ENCODE measurements at regions of chr1 and their contacts with region 1.

Region 1: DNA sequence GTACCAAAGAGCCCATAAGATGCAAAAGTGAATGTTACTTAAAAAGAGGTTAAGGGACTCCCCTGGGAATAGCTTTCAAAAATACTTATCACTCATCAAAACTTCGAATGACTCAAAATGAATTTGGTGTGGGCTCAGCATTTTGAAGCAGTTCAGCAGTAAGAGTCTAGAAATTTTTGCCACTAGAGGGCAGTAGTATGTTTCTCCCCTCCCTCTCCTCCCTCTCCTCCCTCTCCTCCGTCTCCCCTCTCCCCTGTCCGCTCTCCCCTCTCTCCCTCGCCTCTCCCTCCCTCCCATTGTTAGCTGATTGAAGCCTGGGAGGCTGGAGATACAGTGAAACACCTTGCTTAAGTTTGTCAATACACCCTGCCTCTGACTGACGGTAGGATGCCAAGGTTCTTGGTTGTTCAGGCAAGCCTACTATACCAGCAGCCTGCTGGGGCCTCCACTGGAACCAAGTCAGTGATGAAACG is 70.8 kb upstream of the TENT5C start:
- DNase-seq: peak; percentile 29
- H3K4me3 ChIP-seq: no peak overlapping the region
- H3K27ac ChIP-seq: no peak overlapping the region
- H3K27me3 ChIP-seq: no peaks in the 10 kb centered on the region
- CTCF ChIP-seq: peak; percentile 73

Region 2: GRCh38 chr1:117098287-117099210 is 436.5 kb before region 1 on chr1:
- CTCF ChIA-PET with region 1: no interaction called
- POLR2A ChIA-PET with region 1: no interaction called
- DNase-seq: no peak
- H3K4me3 ChIP-seq: no peak overlapping the region
- H3K27ac ChIP-seq: no peak overlapping the region
- H3K27me3 ChIP-seq: no peaks in the 10 kb centered on the region
- CTCF ChIP-seq: no peak

Region 3: GRCh38 chr1:117512743-117513321 is 22.2 kb before region 1 on chr1:
- CTCF ChIA-PET with region 1: interaction called, 37 read pairs
- POLR2A ChIA-PET with region 1: no interaction called
- DNase-seq: no peak
- H3K4me3 ChIP-seq: no peak overlapping the region
- H3K27ac ChIP-seq: no peak overlapping the region
- H3K27me3 ChIP-seq: no peaks in the 10 kb centered on the region
- CTCF ChIP-seq: peak; percentile 64

Region 4: DNA sequence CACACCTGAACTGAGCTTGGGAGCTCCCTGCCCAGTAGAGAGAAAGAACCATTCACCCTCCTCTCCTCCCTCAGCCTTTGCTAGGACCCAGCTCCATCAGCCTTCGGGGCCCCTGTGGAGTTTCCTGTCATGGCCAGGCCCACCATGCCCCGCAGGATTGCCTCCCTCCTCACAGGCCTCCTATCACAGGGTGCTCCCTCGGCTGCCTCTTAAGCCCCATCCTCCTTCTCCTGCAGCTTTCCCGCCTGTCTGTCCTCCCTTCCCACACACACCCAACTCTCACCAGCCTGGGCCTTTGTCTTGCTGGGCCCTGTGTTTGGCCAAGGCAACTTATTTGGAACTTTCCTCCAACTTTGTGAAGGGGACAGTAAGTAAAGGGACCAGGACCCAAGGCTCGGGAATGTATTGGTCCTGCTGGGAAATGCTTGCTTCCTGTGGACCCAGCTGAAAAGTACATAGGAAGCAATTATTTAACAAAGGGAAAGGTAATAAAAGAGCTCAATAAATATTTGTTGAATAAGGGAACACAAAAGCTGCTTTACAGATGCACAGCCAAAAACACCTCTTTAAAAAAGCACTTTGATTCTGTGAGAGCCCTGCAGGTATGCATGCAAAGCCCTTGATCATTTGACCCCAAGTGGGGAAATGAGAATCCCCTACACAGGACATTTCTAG is 39.3 kb after region 1 on chr1:
- CTCF ChIA-PET with region 1: interaction called, 14 read pairs
- POLR2A ChIA-PET with region 1: no interaction called
- DNase-seq: no peak
- H3K4me3 ChIP-seq: no peak overlapping the region
- H3K27ac ChIP-seq: no peak overlapping the region
- H3K27me3 ChIP-seq: peaks cover 6% of the 10 kb centered on the region
- CTCF ChIP-seq: no peak

Region 5: DNA sequence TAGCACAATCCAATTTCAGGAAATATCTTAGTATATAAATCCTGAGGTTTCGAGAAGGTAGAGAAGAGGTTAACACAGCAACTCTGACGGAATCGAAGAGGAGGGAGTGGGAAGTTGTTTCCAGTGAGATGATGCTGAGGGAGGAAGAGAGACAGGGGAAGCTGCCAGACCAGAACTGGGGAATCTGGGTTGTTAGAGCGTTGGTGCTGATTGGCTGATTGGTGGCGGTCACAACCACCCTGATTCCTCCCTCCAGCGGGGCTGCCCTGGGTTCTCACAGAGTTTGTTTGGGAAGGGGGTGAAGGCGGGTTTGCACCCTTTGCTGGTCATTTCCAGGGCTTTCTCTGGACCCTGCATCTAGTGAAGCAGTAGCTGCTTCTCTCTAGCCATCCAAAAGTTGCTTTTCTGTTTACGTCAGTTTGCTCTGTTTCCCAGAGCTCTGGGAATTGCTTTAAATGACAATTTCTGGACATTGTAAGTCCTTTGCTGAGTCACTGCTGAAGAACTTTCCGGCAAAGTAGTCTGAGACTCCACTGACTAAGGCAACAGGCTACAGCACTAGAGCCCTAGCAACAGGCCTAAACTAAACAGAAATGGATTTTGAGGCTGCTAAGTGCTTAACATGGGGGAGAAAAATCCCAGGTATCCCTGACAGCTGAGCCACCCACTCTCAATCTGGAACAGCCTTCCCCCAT is 160.9 kb after region 1 on chr1:
- CTCF ChIA-PET with region 1: interaction called, 19 read pairs
- POLR2A ChIA-PET with region 1: no interaction called
- DNase-seq: peak; percentile 81
- H3K4me3 ChIP-seq: peak overlapping the region; percentile 34
- H3K27ac ChIP-seq: peak overlapping the region; percentile 98
- H3K27me3 ChIP-seq: no peaks in the 10 kb centered on the region
- CTCF ChIP-seq: no peak

Region 6: DNA sequence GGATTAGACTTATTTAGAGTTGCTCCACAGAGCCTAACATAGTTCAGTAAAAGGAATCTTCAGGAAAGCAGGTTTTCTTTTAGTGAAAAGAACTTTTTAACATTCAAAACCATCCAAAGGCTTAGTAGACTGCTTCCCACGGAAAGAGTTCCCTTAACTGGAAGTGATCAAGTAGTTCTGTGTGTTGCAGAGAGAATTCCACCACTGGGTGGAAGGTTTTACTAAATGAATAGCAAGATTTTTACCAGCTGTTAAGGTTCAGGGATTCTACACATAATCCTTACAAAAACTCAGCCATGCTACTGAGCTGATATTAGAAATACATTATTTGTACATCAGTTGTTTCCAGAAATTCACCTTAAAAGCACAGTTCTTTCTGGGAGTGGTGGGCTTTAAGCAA is 274.7 kb after region 1 on chr1:
- CTCF ChIA-PET with region 1: interaction called, 12 read pairs
- POLR2A ChIA-PET with region 1: no interaction called
- DNase-seq: no peak
- H3K4me3 ChIP-seq: no peak overlapping the region
- H3K27ac ChIP-seq: no peak overlapping the region
- H3K27me3 ChIP-seq: no peaks in the 10 kb centered on the region
- CTCF ChIP-seq: peak; percentile 25; the same call in 1 of the 2 replicates

Region 7: GRCh38 chr1:117905020-117905419 is 370.0 kb after region 1 on chr1:
- CTCF ChIA-PET with region 1: interaction called, 16 read pairs
- POLR2A ChIA-PET with region 1: no interaction called
- DNase-seq: no peak
- H3K4me3 ChIP-seq: no peak overlapping the region
- H3K27ac ChIP-seq: no peak overlapping the region
- H3K27me3 ChIP-seq: no peaks in the 10 kb centered on the region
- CTCF ChIP-seq: no peak